ENCODE measurements at regions of chr9 and their contacts with region 1.

Region 1: DNA sequence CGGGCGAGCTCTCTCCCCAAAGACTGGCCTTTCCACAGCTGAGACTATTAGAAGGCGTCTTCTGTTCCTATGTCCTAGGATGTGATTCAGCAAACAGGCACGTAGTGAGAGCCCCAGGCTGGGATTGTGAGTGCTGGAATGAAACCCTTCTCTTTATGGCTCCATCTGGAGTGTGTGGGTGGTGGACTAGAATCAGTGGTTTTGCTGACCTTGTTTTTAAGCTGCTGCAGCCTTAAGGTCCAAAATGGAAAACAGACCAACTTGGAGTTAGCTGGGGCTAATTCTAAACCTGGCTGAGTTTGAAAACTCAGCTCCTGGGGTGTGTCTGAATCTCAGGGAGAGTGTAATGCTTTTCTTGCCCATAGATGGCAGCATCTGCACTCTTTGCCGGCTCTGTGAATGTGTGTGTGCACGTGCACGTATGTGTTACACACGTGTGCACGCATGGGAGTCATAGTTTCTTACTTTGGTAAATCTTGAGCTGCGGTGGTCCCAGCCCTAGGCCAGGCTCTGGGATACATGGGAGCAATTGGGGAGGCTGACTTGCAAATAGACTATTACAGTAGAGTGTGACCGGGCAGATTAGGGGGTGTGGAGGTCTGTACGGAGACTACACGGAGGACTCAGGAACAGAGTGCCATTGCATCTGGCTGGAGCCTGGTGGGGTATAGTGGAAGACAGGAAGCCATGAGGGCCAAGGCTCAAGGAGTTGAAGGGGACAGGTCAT is 10.7 kb downstream of the GSN start:
- DNase-seq: peak; percentile 55
- CTCF ChIP-seq: peak; percentile 46

Region 2: DNA sequence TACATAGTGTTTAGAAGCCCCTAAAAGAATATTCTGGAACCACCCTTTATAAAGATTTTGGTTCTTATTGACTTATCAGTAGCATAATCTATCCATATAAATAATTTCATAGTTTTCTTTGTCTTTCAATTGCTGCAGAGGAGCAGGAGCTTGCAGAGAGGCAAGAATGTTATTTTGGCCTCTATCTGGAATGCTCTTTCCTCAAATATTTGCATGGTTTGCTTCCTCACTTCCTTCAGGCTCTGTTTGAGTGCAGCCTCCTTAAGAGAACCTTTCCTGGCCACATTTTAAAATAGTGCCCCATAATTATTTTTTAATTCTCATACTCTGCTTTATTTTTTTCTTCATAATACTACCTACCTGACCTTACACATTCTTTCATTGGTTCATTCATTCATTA is 230.1 kb before region 1 on chr9:
- CTCF ChIA-PET with region 1: no interaction called
- POLR2A ChIA-PET with region 1: no interaction called
- DNase-seq: no peak
- CTCF ChIP-seq: no peak

Region 3: DNA sequence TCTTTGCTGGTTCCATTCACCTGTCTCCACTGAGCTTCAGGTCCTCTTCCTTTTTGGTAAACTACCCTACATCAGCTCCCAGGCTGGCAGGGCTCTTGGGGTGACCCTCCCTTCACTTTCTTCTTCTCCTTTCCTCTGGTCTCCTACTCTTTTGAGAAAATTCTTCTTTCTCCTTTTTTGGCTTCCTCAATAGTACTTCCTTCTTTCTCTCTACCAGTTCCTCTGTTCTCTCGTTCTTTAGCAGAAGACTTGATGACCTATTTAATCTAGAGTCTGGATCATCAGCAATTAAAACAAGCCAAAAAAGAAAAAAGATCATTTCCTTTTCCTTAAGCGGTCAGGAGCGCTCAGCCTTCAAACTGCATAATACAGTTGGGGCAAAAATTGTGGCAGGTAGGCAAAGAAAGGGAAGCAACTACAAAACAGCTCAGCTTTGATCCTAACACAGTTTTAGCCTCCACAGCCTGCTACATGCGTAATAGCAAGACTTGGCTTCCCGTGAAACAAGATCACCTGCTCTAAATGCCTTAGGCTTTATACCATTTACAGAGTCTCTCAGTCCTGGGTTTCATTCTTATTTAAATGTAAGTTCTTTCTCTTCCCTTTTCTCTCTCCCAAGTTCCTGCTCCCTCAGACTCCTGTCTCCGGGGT is 24.8 kb before region 1 on chr9:
- CTCF ChIA-PET with region 1: interaction called, 15 read pairs
- POLR2A ChIA-PET with region 1: no interaction called
- DNase-seq: no peak
- CTCF ChIP-seq: no peak

Region 4: GRCh38 chr9:121261107-121261460 is 17.6 kb before region 1 on chr9:
- CTCF ChIA-PET with region 1: interaction called, 13 read pairs
- POLR2A ChIA-PET with region 1: no interaction called
- DNase-seq: no peak
- CTCF ChIP-seq: no peak

Region 5: GRCh38 chr9:121267689-121268597 is 10.8 kb before region 1 on chr9 and contains the start of gene GSN:
- CTCF ChIA-PET with region 1: interaction called, 34 read pairs
- POLR2A ChIA-PET with region 1: no interaction called
- DNase-seq: peak; percentile 87
- CTCF ChIP-seq: no peak

Region 6: GRCh38 chr9:121299467-121300234 is 21.0 kb after region 1 on chr9:
- CTCF ChIA-PET with region 1: interaction called, 11 read pairs
- POLR2A ChIA-PET with region 1: no interaction called
- DNase-seq: peak; percentile 56
- CTCF ChIP-seq: no peak

Region 7: DNA sequence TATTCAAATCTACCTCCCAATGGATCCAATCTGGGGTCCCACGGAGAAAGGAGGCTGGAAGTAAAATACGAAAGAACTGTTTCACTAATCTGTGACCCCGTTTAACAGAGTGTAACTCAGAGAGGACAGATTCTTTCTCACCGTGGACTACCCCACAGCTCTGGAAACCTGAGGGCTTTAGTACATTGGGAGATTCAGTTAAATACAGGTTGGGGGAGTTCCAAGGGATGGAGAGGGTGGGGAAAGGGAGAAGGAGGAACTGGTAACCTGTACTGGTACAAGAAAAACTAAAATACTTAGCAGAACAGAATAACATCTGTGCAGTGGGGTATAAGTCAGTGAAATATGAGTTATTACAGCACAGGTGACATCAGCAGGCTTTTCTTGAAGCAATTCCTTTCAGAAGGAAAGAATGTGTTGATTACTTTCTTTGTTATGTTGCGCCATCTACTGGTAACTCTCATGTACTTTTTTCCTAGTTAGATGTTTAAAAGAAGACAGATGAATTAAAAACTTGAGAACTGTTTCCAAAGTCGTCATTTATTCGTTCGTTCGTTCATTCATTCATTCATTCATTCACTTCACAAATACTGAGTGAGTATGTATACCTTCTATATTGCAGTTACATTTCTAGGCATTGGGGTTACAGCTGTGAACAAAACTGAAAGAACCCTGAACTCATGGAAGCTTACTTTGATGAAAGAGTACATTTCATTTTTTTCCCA is 121.3 kb after region 1 on chr9:
- CTCF ChIA-PET with region 1: interaction called, 12 read pairs
- POLR2A ChIA-PET with region 1: no interaction called
- DNase-seq: peak; percentile 26
- CTCF ChIP-seq: peak; percentile 43

Measured in GM10248 (cell line).